HEK293T (cell line): ENCODE measurements at regions of chr1 and their contacts with region 1.

Region 1: DNA sequence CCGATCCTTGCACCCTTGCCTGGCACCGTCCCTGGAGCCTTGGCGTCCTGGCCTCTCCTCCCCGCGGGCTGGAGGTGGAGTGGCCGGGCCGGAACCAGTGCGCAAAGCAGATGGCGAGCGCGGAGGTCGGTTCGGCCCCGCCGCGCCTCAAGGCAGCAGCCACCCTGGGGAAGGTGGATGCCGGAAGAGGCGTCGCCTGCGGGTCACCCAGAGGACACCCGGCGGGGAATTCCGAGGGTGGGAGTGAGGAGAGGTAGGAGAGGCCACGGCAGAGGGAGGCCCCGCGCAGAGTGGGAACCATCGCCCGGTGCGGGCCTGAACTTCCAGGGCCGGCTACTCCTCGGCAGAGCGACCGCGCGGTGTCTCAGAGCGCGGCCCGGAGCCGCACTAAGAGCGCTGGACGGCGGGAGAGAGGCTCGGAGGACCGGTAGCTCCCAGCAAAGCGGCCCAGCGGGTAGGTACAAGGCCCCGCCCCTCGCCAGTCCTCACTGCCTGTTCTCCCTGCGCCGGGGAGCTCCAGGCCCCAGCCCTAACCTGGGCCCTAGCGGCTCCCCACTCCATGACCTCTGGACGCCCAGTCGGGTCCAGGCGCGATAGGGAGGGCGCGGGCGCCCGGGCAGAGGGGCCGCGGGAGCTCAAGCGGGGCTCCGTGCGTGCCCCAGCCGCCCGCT is at the start of gene RNF207:
- DNase-seq: peak; percentile 73

Region 2: DNA sequence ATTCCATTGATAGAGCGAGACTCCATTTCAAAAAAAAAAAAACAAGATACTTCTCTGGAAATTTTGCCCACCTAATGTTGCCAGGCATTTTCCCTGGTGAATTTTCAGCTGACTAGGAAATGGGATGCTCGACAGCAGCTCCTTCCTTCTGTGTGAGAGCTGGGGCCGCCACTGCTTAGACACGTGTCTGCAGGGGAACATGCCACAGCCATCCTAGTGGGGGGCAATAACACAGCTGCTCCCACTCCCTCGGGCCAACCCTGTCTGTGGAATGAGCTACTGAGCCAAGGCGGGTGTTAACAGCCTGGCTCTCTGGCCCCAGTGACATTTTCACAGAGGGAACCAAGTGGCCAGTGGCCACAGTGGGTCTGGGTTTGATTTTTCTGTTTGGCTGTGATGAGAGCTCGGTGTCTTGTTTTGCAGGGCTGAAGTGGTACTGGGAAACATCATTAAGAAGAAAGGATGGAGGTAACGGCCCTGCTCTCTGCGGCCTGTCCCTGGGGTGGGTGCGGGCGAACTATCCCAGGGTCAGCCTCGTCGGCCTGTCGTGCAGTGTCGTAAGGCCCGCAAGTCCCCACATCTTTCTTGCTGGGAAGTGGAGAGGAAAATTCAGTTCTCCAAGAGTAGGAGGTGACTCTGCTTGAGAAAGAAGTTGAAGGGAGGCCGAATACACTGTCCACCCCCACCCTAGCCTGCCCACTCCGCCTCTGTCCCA is 121.0 kb before region 1 on chr1:
- CTCF ChIA-PET with region 1: no interaction called
- POLR2A ChIA-PET with region 1: no interaction called
- DNase-seq: no peak

Region 3: DNA sequence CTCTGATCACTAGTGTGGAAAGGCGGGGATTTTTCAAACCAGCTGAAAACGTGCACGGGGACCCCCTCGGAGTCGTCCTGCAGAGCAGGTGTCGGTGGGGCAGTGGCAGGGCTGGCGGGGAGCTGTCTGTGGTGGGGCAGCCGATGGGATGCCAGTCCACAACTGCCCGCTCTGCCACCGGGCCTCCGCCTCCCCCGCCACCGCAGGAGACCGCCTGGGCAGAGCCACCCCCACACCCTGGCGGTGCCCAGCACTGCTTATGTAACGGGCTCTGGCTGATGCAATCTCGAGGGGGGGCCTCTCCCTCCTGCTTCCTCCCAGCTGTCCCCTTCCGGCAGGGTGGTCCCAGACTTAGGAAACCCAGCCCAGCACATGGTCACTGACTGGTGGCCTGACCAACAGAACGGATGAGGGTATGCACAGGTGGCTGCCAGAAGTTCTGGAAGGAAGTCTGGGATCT is 35.2 kb before region 1 on chr1:
- CTCF ChIA-PET with region 1: no interaction called
- POLR2A ChIA-PET with region 1: no interaction called
- DNase-seq: no peak

Region 4: GRCh38 chr1:6222636-6223035 is 16.7 kb after region 1 on chr1:
- CTCF ChIA-PET with region 1: interaction called, 18 read pairs
- POLR2A ChIA-PET with region 1: interaction called, 9 read pairs
- DNase-seq: no peak

Region 5: DNA sequence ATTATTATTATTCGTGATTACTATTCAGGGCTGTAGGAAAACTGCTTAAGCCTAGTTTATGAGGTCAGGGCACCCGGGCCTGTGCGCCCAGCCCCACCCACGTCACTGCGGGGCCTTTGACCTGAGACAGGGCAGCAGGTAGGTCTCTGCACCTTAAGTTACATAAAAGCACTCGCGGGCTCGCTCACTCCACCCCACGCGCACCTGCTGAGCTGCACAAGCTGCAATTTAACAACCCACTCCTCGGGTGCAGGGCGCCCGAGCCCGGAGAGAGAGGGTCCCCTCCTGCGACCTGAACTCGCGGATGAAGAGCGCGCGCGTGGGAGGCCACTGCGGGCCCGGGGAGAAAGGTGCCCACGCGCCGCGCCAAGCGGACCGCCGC is 29.3 kb after region 1 on chr1:
- CTCF ChIA-PET with region 1: interaction called, 11 read pairs
- POLR2A ChIA-PET with region 1: interaction called, 39 read pairs
- DNase-seq: no peak